PC-9 (cell line): ENCODE measurements at regions of chr10 and their contacts with region 1.

Region 1: GRCh38 chr10:33509231-33509831 is 174.9 kb upstream of the NRP1 start:
- DNase-seq: peak; percentile 85 to 93
- H3K4me3 ChIP-seq: peak overlapping the region; percentile 21; the same call in 1 of the 2 replicates
- H3K27ac ChIP-seq: peak overlapping the region; percentile 43
- H3K4me1 ChIP-seq: peaks cover 24% of the 10 kb centered on the region
- H3K27me3 ChIP-seq: no peaks in the 10 kb centered on the region
- CTCF ChIP-seq: no peak

Region 2: GRCh38 chr10:33801748-33802147 is 292.4 kb after region 1 on chr10:
- CTCF ChIA-PET with region 1: interaction called, 3 read pairs
- POLR2A ChIA-PET with region 1: no interaction called
- intact Hi-C with region 1: loop called (anchors 5 kb)
- DNase-seq: peak; percentile 54 to 80
- H3K4me3 ChIP-seq: no peak overlapping the region
- H3K27ac ChIP-seq: no peak overlapping the region
- H3K4me1 ChIP-seq: peaks cover 14% of the 10 kb centered on the region
- H3K27me3 ChIP-seq: no peaks in the 10 kb centered on the region
- CTCF ChIP-seq: no peak

Region 3: DNA sequence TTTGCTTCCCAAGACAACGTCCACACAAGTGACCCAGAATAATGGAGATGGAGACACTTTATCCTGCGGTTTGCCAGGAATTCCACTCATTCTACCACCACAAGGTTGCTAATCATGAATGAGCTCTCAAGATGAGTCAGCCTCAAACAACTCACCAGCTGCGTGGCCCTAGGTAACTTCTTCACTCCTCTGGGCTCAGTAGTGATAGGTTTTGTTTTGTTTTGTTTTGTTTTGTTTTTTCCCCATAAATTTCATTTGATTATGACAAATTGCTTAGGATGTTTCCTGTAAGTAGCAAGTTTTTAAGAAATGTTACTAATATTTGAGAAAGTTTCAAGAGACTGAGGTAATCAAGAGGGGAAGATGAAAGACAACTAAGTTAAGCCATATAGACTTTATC is 1019.0 kb after region 1 on chr10:
- CTCF ChIA-PET with region 1: no interaction called
- POLR2A ChIA-PET with region 1: no interaction called
- intact Hi-C with region 1: loop called (anchors 5 kb)
- DNase-seq: peak; percentile 74 to 94
- H3K4me3 ChIP-seq: peak overlapping the region; percentile 26; the same call in 1 of the 2 replicates
- H3K27ac ChIP-seq: peak overlapping the region; percentile 68
- H3K4me1 ChIP-seq: peaks cover 33% of the 10 kb centered on the region
- H3K27me3 ChIP-seq: no peaks in the 10 kb centered on the region
- CTCF ChIP-seq: no peak